ENCODE measurements at regions of chr5 and their contacts with region 1.

Region 1: GRCh38 chr5:58891971-58892343 is 309.1 kb downstream of the RAB3C start:
- DNase-seq: no peak
- H3K4me3 ChIP-seq: no peak overlapping the region
- H3K27ac ChIP-seq: no peak overlapping the region
- H3K4me1 ChIP-seq: no peaks in the 10 kb centered on the region; a peak in 1 of 7 replicates
- H3K27me3 ChIP-seq: no peaks in the 10 kb centered on the region
- CTCF ChIP-seq: no peak
- EP300 ChIP-seq: no peak
- POLR2A ChIP-seq: no peak
- RAD21 ChIP-seq: no peak

Region 2: DNA sequence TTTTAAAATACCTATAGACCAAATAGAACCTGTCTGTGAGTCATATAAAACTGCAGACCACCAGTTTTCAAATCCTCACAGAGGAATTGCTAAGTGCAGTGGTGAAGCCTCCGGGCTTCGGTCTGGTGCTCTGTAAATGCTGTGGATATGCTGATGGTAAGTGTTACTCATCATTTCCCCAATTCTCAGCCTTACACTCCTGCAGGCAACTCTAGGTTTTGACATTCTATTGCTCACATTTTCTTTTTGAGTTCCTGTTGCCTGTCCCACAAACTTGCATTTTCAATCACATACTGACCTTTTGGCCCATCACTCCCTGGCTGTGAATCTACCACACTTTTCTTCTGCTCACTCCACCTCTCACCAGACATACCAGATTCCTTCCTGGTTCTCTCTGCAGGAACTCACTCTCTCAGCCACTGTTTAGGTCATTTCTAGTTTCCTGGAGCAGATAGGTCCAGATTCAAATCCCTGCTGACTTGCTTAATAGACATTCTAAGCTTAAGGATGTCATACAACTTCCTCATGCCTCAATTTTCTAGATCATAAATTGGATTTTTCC is 116.2 kb before region 1 on chr5:
- CTCF ChIA-PET with region 1: no interaction called
- POLR2A ChIA-PET with region 1: no interaction called
- DNase-seq: no peak
- H3K4me3 ChIP-seq: no peak overlapping the region
- H3K27ac ChIP-seq: no peak overlapping the region
- H3K4me1 ChIP-seq: no peaks in the 10 kb centered on the region
- H3K27me3 ChIP-seq: no peaks in the 10 kb centered on the region
- CTCF ChIP-seq: no peak
- EP300 ChIP-seq: no peak
- POLR2A ChIP-seq: no peak
- RAD21 ChIP-seq: no peak

Region 3: GRCh38 chr5:58929726-58930125 is 37.8 kb after region 1 on chr5:
- CTCF ChIA-PET with region 1: interaction called, 11 read pairs
- POLR2A ChIA-PET with region 1: no interaction called
- DNase-seq: no peak
- H3K4me3 ChIP-seq: no peak overlapping the region
- H3K27ac ChIP-seq: no peak overlapping the region
- H3K4me1 ChIP-seq: peaks cover 3 to 10% (median 7%) of the 10 kb centered on the region in 4 experiments; a peak in 6 of 7 replicates
- H3K27me3 ChIP-seq: no peaks in the 10 kb centered on the region
- CTCF ChIP-seq: no peak
- EP300 ChIP-seq: no peak
- POLR2A ChIP-seq: no peak
- RAD21 ChIP-seq: no peak

Region 4: DNA sequence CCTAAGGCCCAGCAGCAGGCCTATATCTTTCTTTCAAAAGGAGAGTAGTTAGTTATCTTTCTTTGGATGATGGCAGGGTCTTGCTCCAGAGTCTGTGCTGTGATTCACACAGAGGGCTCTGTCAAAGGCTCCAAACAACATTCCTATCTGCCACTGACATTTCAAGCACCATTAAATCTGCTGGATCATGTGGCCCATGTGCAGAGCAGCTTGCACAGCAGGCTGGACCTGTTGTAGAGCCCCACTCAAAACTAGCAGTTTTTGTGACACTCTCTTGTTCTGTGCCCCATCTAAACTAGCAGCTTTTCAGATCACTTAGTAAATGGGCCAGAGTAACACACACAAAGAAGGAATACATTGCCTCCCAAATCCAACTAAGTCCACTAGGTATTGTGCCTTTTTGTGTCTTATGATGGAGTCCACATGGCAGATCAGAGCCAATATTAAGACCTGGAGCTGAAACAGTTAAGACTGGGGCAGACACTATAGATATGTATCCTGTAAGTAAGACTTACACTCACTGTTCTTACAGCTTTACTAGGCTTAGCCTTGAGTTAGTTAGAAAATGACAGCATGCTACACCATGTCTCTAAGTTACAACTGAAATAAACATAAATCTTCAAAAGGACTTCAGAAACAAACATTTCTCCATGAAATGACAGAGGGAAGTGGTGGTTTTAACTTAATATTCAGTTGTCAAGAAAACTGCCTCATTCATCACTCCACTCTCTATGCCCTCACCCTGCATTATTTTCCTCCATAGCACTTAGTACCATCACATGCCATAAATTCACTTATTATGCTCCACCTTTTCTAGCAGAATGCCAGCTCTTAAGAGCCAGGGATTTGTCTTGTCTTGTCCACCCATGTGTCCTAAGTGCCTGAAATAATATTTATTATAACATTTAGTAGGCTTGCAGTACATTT is 91.8 kb after region 1 on chr5:
- CTCF ChIA-PET with region 1: interaction called, 12 read pairs
- POLR2A ChIA-PET with region 1: no interaction called
- DNase-seq: no peak
- H3K4me3 ChIP-seq: no peak overlapping the region
- H3K27ac ChIP-seq: no peak overlapping the region
- H3K4me1 ChIP-seq: no peaks in the 10 kb centered on the region
- H3K27me3 ChIP-seq: no peaks in the 10 kb centered on the region
- CTCF ChIP-seq: no peak
- EP300 ChIP-seq: no peak
- POLR2A ChIP-seq: no peak
- RAD21 ChIP-seq: no peak

Measured in H1 (cell line).